ENCODE measurements at regions of chr19 and their contacts with region 1.

Region 1: DNA sequence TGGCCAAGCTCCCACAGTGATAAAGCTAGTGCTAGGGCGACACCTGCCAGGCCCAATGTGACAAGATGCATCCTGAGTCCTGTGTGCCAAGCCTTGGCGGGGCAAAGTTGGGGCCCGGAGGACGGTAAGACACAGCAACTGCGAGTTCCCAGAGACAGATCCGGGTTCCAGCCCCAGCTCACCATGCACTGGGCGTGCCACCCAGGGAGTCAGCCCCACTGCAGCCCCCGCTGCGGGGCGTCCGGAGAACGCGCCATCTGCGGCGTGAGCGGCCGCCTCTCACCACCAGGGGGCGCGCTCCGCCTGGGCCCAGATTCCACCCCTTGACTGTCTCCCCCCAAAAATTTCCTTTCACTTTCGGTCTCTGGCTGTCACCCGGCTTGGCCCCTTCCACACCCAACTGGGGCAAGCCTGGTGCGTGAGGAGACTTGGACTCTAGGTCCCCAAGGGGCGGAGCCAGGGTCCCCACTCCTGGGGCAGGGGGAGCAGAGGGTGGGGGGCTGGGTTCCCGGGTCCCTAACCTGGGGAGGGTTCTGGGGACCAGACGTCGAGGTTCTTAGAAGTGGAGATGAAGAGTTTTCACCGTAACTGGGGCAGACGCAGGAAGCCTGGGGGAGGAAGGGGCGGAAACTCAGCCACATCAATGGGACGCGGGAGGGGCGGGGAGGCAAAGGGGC is at the start of gene FLT3LG:
- DNase-seq: peak; percentile 88 to 93
- ATAC-seq: peak; percentile 89
- H3K4me3 ChIP-seq: peak within 1 kb of the TSS; percentile 85 to 86
- H3K27ac ChIP-seq: no peak within 1 kb of the TSS
- H3K4me1 ChIP-seq: no peaks in the 10 kb centered on the region
- H3K27me3 ChIP-seq: no peaks in the 10 kb centered on the region
- total RNA-seq, gene FLT3LG: 6.3 to 17.6 TPM

Region 2: DNA sequence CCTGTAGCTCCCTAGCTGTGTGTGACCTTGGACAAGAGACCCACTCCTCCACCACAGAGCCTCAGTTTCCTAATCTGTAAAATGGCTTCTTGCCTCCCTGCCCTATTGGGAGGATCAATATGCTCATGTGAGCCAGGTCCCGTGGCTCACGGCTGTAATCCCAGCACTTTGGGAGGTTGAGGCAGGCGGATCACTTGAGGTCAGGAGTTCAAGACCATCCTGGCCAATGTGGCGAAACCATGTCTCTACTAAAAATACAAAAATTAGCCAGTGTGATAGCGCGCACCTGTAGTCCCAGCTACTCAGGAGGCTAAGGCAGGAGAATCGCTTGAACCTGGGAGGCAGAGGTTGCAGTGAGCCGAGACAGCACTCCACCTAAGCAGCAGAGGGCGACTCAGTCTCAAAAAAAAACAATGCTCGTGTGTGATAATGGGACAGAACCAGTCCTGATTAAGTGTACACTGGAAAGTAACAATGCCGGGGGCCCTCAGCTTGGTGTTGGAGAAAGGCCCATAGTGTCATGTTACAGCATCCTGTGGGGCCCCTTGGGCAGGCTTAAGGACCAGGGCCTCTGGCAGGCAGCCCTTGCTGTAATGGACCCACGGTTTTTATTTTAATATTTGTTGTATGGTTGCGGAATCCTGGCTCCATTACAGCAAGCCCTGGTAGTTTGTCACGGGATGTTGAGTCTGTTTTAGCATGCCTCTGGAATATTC is 29.0 kb after region 1 on chr19:
- intact Hi-C with region 1: no loop called
- DNase-seq: no peak
- ATAC-seq: peak; percentile 51
- H3K4me3 ChIP-seq: no peak overlapping the region
- H3K27ac ChIP-seq: no peak overlapping the region
- H3K4me1 ChIP-seq: no peaks in the 10 kb centered on the region
- H3K27me3 ChIP-seq: no peaks in the 10 kb centered on the region

Region 3: DNA sequence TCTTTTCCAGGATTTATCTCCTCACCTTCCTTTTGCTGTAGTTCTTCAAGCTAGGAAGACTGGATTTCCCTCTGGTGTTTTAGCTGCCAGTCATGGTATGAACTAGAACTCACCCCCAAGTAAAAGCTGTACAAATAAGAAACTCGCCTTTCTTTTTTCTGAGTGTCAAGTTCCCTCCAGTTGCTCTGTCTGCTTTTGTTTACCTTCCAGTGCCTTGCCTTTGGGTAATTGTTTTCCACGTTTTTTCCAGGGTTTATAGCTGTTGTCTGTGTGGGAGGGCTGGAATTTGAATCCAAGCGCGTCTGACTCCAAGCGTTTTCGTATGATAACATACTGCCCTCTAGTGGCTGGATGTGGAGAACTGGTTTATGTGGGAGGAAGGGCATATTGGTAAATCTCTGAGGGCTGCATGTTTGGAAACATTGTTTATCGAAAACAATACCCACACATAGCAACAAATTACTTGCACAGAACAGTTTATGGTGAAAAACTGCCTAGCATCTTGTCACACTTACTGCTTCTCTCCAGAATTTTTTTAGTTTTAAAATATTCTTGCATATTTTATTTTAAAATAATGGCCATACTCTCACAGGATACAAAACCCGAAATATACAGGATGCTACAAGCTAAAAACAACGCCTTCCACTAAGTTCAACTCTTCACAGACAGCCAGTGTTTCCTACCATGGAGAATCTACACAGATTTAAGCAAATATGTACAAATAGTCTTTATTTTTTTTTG is 73.0 kb after region 1 on chr19:
- intact Hi-C with region 1: loop called (anchors 2 to 5 kb)
- DNase-seq: no peak
- ATAC-seq: peak; percentile 88
- H3K4me3 ChIP-seq: no peak overlapping the region
- H3K27ac ChIP-seq: no peak overlapping the region
- H3K4me1 ChIP-seq: no peaks in the 10 kb centered on the region
- H3K27me3 ChIP-seq: no peaks in the 10 kb centered on the region